CD8-positive, alpha-beta T cell (primary cell): ENCODE measurements at regions of chr20 and their contacts with region 1.

Region 1: GRCh38 chr20:1651268-1652058 is 6.1 kb downstream of the SIRPG start:
- DNase-seq: peak in 2 of 9 experiments; percentile 29 to 49
- ATAC-seq: no peak
- H3K4me3 ChIP-seq: peak overlapping the region in 1 of 2 experiments; percentile 12
- H3K4me3 Mint-ChIP-seq: peak overlapping the region; percentile 64
- H3K27ac ChIP-seq: peak overlapping the region in 1 of 2 experiments; percentile 51
- H3K27ac Mint-ChIP-seq: peak overlapping the region; percentile 88
- H3K4me1 ChIP-seq: peaks cover 83% of the 10 kb centered on the region
- H3K4me1 Mint-ChIP-seq: peaks cover 86% of the 10 kb centered on the region
- H3K27me3 ChIP-seq: no peaks in the 10 kb centered on the region
- H3K27me3 Mint-ChIP-seq: no peaks in the 10 kb centered on the region
- CTCF ChIP-seq: no peak

Region 2: DNA sequence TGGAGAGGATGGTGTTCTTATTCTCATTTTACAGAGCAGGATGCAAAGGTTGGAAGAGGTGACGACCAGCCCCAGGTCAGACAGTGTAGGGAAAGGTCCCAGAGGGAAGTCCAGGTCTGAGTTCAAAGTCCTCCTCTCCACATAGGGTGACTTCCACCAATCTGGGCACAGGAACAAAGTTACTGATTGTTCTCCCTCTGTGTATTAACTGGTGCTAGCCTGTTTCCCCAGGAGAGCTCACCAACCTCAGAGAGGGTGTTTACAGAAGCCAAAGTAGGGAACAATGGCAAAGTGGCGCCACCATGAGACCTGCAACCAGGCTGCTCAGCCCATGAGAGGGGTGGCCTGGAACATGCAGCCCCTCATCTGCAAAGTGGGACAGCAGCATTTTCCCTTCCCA is 14.8 kb before region 1 on chr20:
- CTCF ChIA-PET with region 1: interaction called, 3 read pairs
- POLR2A ChIA-PET with region 1: interaction called, 3 read pairs
- intact Hi-C with region 1: loop called in 1 of 2 experiments (anchors 2 kb)
- DNase-seq: no peak
- ATAC-seq: no peak
- H3K4me3 ChIP-seq: no peak overlapping the region
- H3K4me3 Mint-ChIP-seq: no peak overlapping the region
- H3K27ac ChIP-seq: no peak overlapping the region
- H3K27ac Mint-ChIP-seq: peak overlapping the region; percentile 15
- H3K4me1 ChIP-seq: peaks cover 38% of the 10 kb centered on the region
- H3K4me1 Mint-ChIP-seq: peaks cover 67% of the 10 kb centered on the region
- H3K27me3 ChIP-seq: no peaks in the 10 kb centered on the region
- H3K27me3 Mint-ChIP-seq: no peaks in the 10 kb centered on the region
- CTCF ChIP-seq: no peak

Region 3: GRCh38 chr20:1663917-1664316 is 12.5 kb after region 1 on chr20:
- CTCF ChIA-PET with region 1: no interaction called
- POLR2A ChIA-PET with region 1: interaction called, 11 read pairs
- intact Hi-C with region 1: loop called in 1 of 2 experiments (anchors 2 kb)
- DNase-seq: peak in 3 of 9 experiments; percentile 34 to 58 (median 48)
- ATAC-seq: peak; percentile 34
- H3K4me3 ChIP-seq: peak overlapping the region in 1 of 2 experiments; percentile 13
- H3K4me3 Mint-ChIP-seq: peak overlapping the region; percentile 75
- H3K27ac ChIP-seq: peak overlapping the region in 1 of 2 experiments; percentile 69
- H3K27ac Mint-ChIP-seq: peak overlapping the region; percentile 91
- H3K4me1 ChIP-seq: peaks cover 93% of the 10 kb centered on the region
- H3K4me1 Mint-ChIP-seq: peaks cover 95% of the 10 kb centered on the region
- H3K27me3 ChIP-seq: no peaks in the 10 kb centered on the region
- H3K27me3 Mint-ChIP-seq: no peaks in the 10 kb centered on the region
- CTCF ChIP-seq: no peak

Region 4: GRCh38 chr20:1685304-1686052 is 34.0 kb after region 1 on chr20:
- CTCF ChIA-PET with region 1: no interaction called
- POLR2A ChIA-PET with region 1: no interaction called
- intact Hi-C with region 1: loop called in 1 of 2 experiments (anchors 5 kb)
- DNase-seq: no peak
- ATAC-seq: peak; percentile 50
- H3K4me3 ChIP-seq: peak overlapping the region; percentile 49 to 61
- H3K4me3 Mint-ChIP-seq: peak overlapping the region; percentile 87
- H3K27ac ChIP-seq: peak overlapping the region; percentile 39 to 62
- H3K27ac Mint-ChIP-seq: peak overlapping the region; percentile 92
- H3K4me1 ChIP-seq: peaks cover 26% of the 10 kb centered on the region
- H3K4me1 Mint-ChIP-seq: peaks cover 68% of the 10 kb centered on the region
- H3K27me3 ChIP-seq: no peaks in the 10 kb centered on the region
- H3K27me3 Mint-ChIP-seq: no peaks in the 10 kb centered on the region
- CTCF ChIP-seq: no peak

Region 5: DNA sequence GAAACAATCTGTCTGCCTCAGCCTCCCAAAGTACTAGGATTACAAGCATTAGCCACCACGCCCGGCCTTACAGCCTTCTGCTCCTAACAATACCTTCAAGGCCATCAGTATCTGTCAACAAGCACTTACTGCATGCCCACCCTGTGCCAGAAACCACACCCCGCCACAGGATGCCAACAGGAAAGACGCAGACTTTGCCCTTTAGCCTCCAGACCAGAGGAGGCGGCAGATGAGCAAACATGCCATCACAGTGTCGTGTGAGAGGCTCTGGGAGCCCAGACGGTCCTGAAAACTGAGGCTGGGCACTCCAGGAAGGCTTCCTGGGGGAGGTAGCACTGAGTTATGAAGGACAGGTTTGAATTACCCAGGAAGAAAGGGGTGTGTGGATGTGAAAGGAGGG is 609.6 kb after region 1 on chr20:
- CTCF ChIA-PET with region 1: no interaction called
- POLR2A ChIA-PET with region 1: no interaction called
- intact Hi-C with region 1: no loop called
- DNase-seq: no peak
- ATAC-seq: no peak
- H3K4me3 ChIP-seq: no peak overlapping the region
- H3K4me3 Mint-ChIP-seq: no peak overlapping the region
- H3K27ac ChIP-seq: no peak overlapping the region
- H3K27ac Mint-ChIP-seq: no peak overlapping the region
- H3K4me1 ChIP-seq: no peaks in the 10 kb centered on the region
- H3K4me1 Mint-ChIP-seq: no peaks in the 10 kb centered on the region
- H3K27me3 ChIP-seq: peaks cover 0 to 4% of the 10 kb centered on the region in 2 experiments
- H3K27me3 Mint-ChIP-seq: peaks cover 22% of the 10 kb centered on the region
- CTCF ChIP-seq: no peak